PC-9 (cell line): ENCODE measurements at regions of chr4 and their contacts with region 1.

Region 1: GRCh38 chr4:40046311-40046980 is 10.2 kb upstream of the N4BP2 start:
- DNase-seq: peak; percentile 42 to 65
- H3K4me3 ChIP-seq: no peak overlapping the region
- H3K27ac ChIP-seq: peak overlapping the region; percentile 46; the same call in 1 of the 2 replicates
- H3K4me1 ChIP-seq: 0 out of 2 replicates have a peak, but pooled peaks cover 9% of the 10 kb centered on the region
- H3K27me3 ChIP-seq: no peaks in the 10 kb centered on the region
- CTCF ChIP-seq: no peak

Region 2: DNA sequence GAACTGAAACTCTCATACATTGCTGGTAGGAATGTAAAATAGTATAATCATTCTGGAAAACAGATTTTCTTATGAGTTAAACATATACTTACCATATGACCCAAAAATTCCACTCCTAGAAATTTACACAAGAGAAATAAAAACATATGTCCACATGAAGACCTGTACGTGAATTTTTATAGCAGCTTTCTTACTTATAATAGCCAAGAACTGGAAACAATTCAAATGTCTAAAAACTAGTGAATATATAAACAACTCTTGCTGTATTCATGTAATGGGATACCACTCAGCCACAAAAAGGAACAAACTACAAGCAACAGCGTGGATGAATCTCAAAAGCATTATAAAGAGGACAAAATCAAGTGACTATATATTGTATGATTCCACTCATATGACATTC is 1041.7 kb before region 1 on chr4:
- CTCF ChIA-PET with region 1: no interaction called
- POLR2A ChIA-PET with region 1: no interaction called
- intact Hi-C with region 1: no loop called
- DNase-seq: no peak
- H3K4me3 ChIP-seq: no peak overlapping the region
- H3K27ac ChIP-seq: no peak overlapping the region
- H3K4me1 ChIP-seq: no peaks in the 10 kb centered on the region
- H3K27me3 ChIP-seq: no peaks in the 10 kb centered on the region
- CTCF ChIP-seq: no peak

Region 3: DNA sequence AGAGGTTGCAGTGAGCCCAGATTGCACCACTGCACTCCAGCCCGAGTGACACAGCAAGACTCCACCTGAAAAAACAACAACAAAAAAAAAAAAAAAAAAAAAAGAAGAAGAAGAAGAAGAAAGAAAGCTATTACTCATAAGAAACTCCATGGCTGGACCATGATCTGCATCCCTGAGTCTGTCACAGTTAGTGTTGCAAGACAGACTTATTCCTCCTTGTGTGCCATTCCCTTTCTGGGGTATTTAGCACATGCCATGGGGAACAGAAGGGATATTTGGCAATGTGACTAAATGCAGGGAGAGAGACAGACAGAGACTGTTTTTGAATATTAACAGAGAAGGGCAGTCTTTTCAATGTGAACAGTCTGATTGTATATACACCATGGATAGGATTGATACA is 52.0 kb before region 1 on chr4:
- CTCF ChIA-PET with region 1: no interaction called
- POLR2A ChIA-PET with region 1: no interaction called
- intact Hi-C with region 1: loop called (anchors 2 kb)
- DNase-seq: no peak
- H3K4me3 ChIP-seq: no peak overlapping the region
- H3K27ac ChIP-seq: no peak overlapping the region
- H3K4me1 ChIP-seq: peaks cover 19% of the 10 kb centered on the region
- H3K27me3 ChIP-seq: no peaks in the 10 kb centered on the region
- CTCF ChIP-seq: no peak